ENCODE measurements at regions of chr20 and their contacts with region 1.

Region 1: DNA sequence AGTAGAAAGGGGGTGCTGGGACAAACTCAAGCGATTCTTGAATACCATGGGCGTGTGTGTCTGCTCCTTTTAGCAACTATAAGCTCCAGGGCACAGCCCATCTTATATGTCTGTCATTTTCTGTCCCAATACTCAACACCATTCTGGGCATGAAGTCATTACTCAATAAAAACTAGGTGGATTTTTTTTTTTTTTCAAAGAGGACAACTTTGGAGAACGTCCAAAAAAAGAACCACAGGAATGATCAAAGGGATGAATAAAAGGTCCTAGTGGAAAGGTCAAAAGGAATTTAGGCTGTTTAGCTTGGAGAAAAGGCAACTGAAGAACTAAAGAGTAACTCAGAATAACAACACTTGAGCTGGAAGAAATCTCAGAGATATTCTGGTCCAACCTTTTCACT is 24.4 kb downstream of the UQCC1 start:
- DNase-seq: peak; percentile 83
- H3K4me3 Mint-ChIP-seq: no peak overlapping the region
- H3K27ac Mint-ChIP-seq: no peak overlapping the region
- H3K4me1 Mint-ChIP-seq: peaks cover 13% of the 10 kb centered on the region
- H3K27me3 Mint-ChIP-seq: no peaks in the 10 kb centered on the region
- CTCF ChIP-seq: no peak

Region 2: GRCh38 chr20:35238170-35238569 is 149.2 kb before region 1 on chr20:
- CTCF ChIA-PET with region 1: no interaction called
- POLR2A ChIA-PET with region 1: no interaction called
- intact Hi-C with region 1: no loop called
- DNase-seq: no peak
- H3K4me3 Mint-ChIP-seq: no peak overlapping the region
- H3K27ac Mint-ChIP-seq: no peak overlapping the region
- H3K4me1 Mint-ChIP-seq: no peaks in the 10 kb centered on the region
- H3K27me3 Mint-ChIP-seq: peaks cover 56% of the 10 kb centered on the region
- CTCF ChIP-seq: no peak

Region 3: DNA sequence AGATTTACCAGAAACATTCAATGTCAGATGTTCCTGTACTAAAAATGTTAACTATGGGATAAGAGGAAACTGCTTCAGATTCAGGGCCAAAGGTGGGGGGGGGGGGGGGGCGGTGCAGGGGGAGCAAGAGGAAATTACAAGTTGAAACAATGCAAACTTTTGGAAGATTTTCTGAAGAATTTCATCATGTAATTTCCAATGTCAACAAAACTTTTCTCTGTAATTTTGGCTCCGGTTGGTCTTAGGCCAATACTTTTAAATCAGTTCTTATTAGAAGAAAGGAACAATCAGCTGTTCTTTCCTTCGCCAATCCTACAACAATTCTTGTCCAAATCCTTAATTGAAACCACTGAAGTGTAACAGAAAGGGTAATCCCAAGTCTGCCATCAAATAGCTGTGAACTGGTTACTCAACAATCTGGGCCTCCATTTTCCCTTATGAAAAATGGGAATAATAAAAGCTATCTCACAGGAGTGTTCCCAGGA is 11.4 kb after region 1 on chr20:
- CTCF ChIA-PET with region 1: interaction called, 3 read pairs
- POLR2A ChIA-PET with region 1: interaction called, 15 read pairs
- intact Hi-C with region 1: no loop called
- DNase-seq: no peak
- H3K4me3 Mint-ChIP-seq: no peak overlapping the region
- H3K27ac Mint-ChIP-seq: no peak overlapping the region
- H3K4me1 Mint-ChIP-seq: no peaks in the 10 kb centered on the region
- H3K27me3 Mint-ChIP-seq: no peaks in the 10 kb centered on the region
- CTCF ChIP-seq: no peak